Activated CD4-positive, alpha-beta T cell treated with anti-CD3 and anti-CD28 coated beads for 36 hours (primary cell): ENCODE measurements at regions of chr14 and their contacts with region 1.

Region 1: DNA sequence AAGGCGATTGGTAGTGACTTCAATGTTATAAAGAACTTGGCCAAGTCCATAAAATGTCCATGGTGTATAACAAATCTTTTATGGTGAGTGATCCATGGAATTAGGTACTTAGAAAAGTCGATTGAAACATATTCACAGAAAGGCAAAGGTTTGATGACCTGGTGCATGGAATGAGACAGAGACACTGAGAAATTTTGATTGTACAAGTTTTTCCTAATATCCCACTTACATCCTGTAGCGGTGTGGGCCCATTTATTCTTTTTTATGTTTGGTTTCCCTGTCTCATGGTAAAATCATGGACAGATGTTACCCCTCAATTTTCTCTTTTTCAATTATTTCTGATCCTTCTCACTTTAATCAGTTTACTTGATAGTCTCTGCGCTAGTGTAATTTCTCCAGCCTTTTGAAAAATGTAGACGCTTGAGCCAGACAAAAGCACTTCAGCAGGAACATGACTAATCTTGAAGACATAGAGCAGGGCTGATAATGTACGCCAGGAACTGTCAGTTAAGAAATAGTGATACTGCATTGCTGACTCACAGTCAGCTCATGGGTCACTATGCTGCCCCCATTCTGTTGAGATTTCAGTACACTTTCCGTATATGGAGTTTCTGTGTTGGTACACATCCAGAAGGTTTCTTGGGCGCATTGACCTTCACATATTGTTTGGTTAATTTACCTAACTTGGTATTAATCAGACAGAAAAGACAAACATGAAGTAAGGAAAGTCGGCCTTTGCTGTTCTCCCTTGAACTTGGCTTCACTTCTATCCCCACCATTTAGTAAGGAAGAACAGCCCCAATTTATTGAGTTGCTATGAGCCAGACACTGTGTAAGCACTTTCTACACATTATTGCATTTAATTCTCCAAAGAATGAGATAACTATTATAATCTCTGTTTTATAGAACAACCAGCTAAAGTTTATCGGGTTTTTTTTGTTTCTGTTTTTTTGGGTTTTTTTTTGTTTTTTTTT is 841.7 kb downstream of the DIO2 start:
- DNase-seq: no peak
- ATAC-seq: no peak
- H3K4me3 Mint-ChIP-seq: no peak overlapping the region
- H3K27ac Mint-ChIP-seq: no peak overlapping the region
- H3K4me1 Mint-ChIP-seq: no peaks in the 10 kb centered on the region
- H3K27me3 Mint-ChIP-seq: no peaks in the 10 kb centered on the region

Region 2: DNA sequence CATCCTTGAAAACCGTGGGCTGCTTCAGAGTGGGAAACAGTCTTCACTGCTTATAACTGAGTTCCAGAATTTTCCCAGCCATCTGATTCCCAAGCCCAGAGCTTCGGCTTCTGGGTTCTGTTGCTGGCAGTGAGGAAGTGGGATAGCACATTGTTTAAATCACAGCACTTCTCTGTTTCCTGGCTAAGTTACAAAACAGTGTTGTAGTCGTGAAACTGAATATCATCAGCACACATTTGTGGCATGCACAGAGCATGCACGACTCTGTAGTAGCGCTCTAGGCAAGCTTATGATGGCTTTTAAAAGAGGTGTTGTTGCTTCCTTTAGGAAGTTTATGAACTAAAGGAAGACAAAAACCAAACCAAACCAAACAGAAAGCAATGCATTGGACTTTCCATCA is 194.0 kb before region 1 on chr14:
- CTCF ChIA-PET with region 1: no interaction called
- POLR2A ChIA-PET with region 1: interaction called, 14 read pairs
- intact Hi-C with region 1: no loop called
- DNase-seq: no peak
- ATAC-seq: no peak
- H3K4me3 Mint-ChIP-seq: no peak overlapping the region
- H3K27ac Mint-ChIP-seq: no peak overlapping the region
- H3K4me1 Mint-ChIP-seq: no peaks in the 10 kb centered on the region
- H3K27me3 Mint-ChIP-seq: no peaks in the 10 kb centered on the region

Region 3: DNA sequence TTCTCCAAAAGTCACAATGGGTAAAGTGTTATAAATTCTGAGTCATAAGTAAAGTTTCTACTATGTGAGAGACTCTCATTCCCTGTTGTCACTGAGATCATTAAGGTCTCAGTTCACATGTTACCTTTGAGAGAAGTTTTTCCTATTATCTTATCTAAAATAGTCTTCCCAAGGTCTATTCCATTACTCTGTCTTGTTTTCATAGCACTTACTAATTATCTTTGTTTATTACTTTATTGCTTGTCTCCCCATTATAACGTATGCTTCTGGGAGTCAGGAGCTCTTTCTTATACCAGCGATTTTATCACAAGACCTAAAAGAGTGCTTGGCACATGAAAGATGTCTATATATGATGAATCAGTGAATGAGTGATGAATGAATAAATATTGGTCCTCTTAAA is 160.2 kb before region 1 on chr14:
- CTCF ChIA-PET with region 1: no interaction called
- POLR2A ChIA-PET with region 1: no interaction called
- intact Hi-C with region 1: no loop called
- DNase-seq: no peak
- ATAC-seq: no peak
- H3K4me3 Mint-ChIP-seq: no peak overlapping the region
- H3K27ac Mint-ChIP-seq: no peak overlapping the region
- H3K4me1 Mint-ChIP-seq: no peaks in the 10 kb centered on the region
- H3K27me3 Mint-ChIP-seq: no peaks in the 10 kb centered on the region

Region 4: DNA sequence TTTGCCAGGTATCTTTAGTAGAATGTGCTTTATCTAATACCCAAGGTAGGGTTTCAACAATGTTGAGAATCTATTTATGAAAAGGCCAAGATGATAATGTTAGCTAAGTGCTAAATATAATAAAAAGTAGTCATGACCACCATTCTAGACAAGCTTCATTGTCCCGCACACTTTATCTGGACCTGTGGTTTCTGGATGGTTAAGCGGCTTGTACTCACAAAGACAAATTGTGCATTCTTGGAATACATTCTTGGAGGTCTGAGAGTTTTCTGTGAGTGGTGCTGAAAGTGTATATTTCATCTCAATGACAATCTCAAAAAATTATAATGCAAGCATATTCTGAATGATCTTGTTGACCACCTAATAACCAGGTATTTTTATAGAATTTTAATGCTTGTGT is 194.7 kb after region 1 on chr14:
- CTCF ChIA-PET with region 1: no interaction called
- POLR2A ChIA-PET with region 1: no interaction called
- intact Hi-C with region 1: no loop called
- DNase-seq: no peak
- ATAC-seq: no peak
- H3K4me3 Mint-ChIP-seq: no peak overlapping the region
- H3K27ac Mint-ChIP-seq: no peak overlapping the region
- H3K4me1 Mint-ChIP-seq: no peaks in the 10 kb centered on the region
- H3K27me3 Mint-ChIP-seq: no peaks in the 10 kb centered on the region

Region 5: DNA sequence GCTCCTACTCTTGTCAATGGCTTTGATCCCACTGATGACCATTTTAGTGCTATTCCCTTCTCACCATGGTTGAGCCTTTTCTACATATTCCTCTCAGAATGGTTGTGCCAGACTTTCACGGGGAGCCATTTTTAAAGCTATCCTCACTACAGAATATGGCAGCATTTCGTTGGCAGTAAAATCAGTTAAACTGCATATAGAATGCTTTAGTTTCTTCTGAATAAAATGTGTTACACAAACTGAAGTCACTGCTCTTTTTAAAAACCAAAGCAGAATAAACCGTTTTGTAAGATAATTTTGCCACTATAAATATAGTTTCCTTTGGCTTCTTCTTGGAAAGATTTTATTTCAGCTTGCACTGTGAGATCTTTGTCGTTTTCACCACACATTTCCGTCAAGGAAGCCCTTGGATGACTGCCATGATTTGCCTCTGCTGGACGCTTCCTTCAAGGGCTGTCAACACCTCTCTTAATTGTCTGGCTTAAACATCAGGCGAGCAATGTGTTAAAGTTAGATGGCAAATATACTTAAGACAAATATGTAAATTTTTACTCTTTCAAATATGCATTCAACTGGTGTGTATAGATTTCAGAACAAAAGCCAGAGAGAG is 217.4 kb after region 1 on chr14:
- CTCF ChIA-PET with region 1: no interaction called
- POLR2A ChIA-PET with region 1: no interaction called
- intact Hi-C with region 1: no loop called
- DNase-seq: no peak
- ATAC-seq: no peak
- H3K4me3 Mint-ChIP-seq: no peak overlapping the region
- H3K27ac Mint-ChIP-seq: no peak overlapping the region
- H3K4me1 Mint-ChIP-seq: no peaks in the 10 kb centered on the region
- H3K27me3 Mint-ChIP-seq: no peaks in the 10 kb centered on the region